GM10248 (cell line): ENCODE measurements at regions of chr2 and their contacts with region 1.

Region 1: GRCh38 chr2:25228848-25229278 is 60.5 kb upstream of the POMC start:
- DNase-seq: peak; percentile 69
- CTCF ChIP-seq: peak; percentile 59

Region 2: DNA sequence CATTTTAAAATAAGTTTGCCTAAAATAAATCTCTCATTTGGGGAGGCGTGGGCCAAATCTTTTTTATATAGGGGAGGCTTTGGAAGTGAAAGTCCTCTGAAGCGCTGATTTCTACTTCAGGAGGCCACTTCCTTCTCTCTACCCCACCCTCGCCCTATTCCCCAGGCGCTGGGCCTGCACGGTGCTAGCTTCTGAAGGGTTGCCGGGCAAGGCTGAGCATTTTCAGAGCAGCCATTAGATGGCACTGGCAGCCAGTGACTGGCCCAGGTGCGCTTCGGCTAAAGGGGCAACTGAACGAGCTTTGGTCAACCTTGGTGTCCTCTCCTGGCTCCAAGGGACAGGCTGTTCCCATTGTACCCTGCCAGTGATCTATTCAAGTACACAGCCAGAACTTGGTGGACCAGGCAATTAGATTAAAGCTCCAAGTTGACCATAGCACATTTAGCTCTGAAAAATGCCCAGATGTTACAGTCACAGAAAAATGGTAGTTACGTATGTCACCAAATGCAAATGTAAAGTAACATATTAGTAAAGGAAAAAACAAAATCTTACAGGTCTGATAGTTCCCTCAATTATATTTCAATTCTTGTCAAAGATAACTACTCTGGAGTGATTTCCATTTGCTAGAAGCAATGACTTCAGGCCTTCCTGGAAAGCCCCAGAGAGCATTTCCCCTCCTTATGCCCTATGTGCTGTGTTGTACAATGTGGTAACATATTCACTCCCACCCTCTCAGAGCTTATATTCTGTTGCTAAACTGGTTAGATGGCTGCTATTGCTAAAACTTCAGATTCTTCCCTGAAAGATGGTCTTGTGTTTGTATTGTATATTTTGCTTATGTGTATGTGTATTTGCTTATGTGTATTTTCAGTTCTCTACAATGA is 62.6 kb before region 1 on chr2:
- CTCF ChIA-PET with region 1: interaction called, 13 read pairs
- POLR2A ChIA-PET with region 1: no interaction called
- DNase-seq: peak; percentile 81
- CTCF ChIP-seq: peak; percentile 60

Region 3: GRCh38 chr2:25204190-25204838 is 24.5 kb before region 1 on chr2:
- CTCF ChIA-PET with region 1: interaction called, 15 read pairs
- POLR2A ChIA-PET with region 1: no interaction called
- DNase-seq: peak; percentile 75
- CTCF ChIP-seq: no peak

Region 4: GRCh38 chr2:25243995-25244394 is 15.1 kb after region 1 on chr2:
- CTCF ChIA-PET with region 1: interaction called, 22 read pairs
- POLR2A ChIA-PET with region 1: no interaction called
- DNase-seq: no peak
- CTCF ChIP-seq: no peak

Region 5: GRCh38 chr2:25250331-25251070 is 21.6 kb after region 1 on chr2:
- CTCF ChIA-PET with region 1: interaction called, 12 read pairs
- POLR2A ChIA-PET with region 1: no interaction called
- DNase-seq: no peak
- CTCF ChIP-seq: no peak